A673 (cell line): ENCODE measurements at regions of chr14 and their contacts with region 1.

Region 1: DNA sequence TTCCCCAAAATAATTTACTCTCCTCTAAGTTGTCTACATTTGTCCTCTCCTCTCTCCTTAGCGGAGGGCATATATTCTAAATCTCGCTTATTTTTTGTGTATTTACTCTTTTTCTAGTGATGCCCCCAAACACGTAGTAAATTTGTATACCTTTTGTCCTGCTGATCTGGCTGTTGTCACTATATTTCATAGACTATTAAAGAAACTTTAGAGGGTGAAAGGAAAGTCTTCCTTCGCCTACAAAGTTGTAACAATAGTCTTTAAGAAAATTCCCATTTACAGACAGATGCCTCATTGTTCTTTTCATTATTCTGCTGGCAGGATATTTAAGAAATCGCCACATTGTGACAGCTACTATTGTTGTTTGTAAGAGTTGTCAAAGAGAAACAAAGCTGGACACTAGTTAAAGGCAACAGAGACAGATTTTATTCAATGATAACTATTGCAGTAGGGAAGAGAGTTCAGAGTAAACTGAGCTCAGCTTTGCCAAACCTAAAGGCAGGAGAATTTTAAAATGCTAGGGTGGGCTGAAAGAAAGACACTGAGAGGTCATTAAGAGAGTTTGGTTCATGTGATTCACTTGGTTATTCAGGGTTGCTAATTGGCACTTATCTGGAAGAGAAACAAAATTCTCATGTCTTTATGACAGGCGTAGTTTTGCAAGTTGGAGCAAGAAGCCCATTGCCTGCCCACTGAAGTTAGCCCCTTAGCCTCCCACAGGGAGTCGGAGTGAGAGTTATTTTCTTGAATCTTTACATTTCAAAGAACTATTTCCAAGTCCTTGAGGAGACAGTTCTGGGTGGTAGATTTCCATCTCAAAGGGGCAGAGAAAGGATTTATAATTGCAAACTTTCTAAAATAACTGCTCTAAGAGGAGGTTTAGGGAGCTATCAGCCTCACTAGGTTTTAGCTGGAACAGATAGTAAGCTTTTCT is 1272.5 kb upstream of the SEL1L start:
- DNase-seq: no peak
- H3K4me3 ChIP-seq: no peak overlapping the region
- H3K27ac ChIP-seq: no peak overlapping the region
- H3K4me1 ChIP-seq: peaks cover 3% of the 10 kb centered on the region
- H3K27me3 ChIP-seq: no peaks in the 10 kb centered on the region
- CTCF ChIP-seq: no peak

Region 2: GRCh38 chr14:82725213-82725612 is 80.9 kb before region 1 on chr14:
- CTCF ChIA-PET with region 1: no interaction called
- POLR2A ChIA-PET with region 1: no interaction called
- intact Hi-C with region 1: no loop called
- DNase-seq: no peak
- H3K4me3 ChIP-seq: no peak overlapping the region
- H3K27ac ChIP-seq: no peak overlapping the region
- H3K4me1 ChIP-seq: no peaks in the 10 kb centered on the region
- H3K27me3 ChIP-seq: no peaks in the 10 kb centered on the region
- CTCF ChIP-seq: no peak

Region 3: GRCh38 chr14:82837611-82838140 is 31.5 kb after region 1 on chr14:
- CTCF ChIA-PET with region 1: no interaction called
- POLR2A ChIA-PET with region 1: interaction called, 16 read pairs
- intact Hi-C with region 1: no loop called
- DNase-seq: peak; percentile 84
- H3K4me3 ChIP-seq: no peak overlapping the region
- H3K27ac ChIP-seq: peak overlapping the region; percentile 21
- H3K4me1 ChIP-seq: peaks cover 50% of the 10 kb centered on the region
- H3K27me3 ChIP-seq: no peaks in the 10 kb centered on the region
- CTCF ChIP-seq: no peak

Region 4: GRCh38 chr14:83041224-83041623 is 235.1 kb after region 1 on chr14:
- CTCF ChIA-PET with region 1: no interaction called
- POLR2A ChIA-PET with region 1: no interaction called
- intact Hi-C with region 1: no loop called
- DNase-seq: peak; percentile 24
- H3K4me3 ChIP-seq: no peak overlapping the region
- H3K27ac ChIP-seq: no peak overlapping the region
- H3K4me1 ChIP-seq: no peaks in the 10 kb centered on the region
- H3K27me3 ChIP-seq: no peaks in the 10 kb centered on the region
- CTCF ChIP-seq: no peak